ENCODE measurements at regions of chr3 and their contacts with region 1.

Region 1: DNA sequence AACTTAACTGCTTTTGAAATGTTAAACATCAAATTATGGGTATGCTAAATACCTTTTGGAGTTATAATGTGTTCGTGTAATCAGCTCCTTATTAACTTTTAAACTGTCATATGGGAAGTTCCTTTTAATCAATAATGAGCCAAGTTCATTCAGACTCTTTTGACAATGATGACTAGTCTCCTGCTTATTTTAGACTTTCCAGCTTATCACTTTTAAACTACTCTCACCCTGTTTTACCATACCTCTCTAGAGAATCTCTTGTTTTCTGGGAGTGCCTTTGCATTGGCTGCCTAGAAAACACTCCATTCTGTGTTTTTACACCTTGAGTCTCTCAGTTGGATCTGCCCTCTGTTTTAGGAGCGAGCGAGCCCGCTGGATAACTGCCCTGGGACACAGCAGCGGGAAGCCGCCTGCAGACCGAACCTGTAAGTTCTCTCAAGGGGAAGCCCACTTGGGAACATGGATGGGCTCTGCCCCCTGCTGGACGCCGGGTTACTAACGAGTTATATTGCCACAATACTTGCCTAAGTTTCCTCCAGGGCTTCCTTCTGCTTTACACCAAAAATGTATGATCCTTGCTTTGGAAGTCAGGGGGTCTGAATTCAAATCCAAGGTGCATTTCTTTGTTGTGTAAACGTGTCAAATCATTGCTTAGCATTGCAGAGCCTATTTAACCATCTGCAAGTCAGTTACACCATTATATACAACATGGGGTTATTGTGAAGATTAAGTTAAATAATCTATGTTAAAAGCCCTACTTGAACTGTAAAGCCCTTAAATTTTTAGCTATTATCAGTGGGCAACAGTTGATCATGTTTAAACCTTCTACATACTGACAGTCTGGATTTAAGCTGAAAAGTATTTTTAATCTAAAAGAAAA is 71.3 kb downstream of the DHX36 start:
- DNase-seq: peak; percentile 88
- H3K4me3 Mint-ChIP-seq: no peak overlapping the region
- H3K27ac Mint-ChIP-seq: no peak overlapping the region
- H3K4me1 Mint-ChIP-seq: no peaks in the 10 kb centered on the region
- H3K27me3 Mint-ChIP-seq: no peaks in the 10 kb centered on the region

Region 2: DNA sequence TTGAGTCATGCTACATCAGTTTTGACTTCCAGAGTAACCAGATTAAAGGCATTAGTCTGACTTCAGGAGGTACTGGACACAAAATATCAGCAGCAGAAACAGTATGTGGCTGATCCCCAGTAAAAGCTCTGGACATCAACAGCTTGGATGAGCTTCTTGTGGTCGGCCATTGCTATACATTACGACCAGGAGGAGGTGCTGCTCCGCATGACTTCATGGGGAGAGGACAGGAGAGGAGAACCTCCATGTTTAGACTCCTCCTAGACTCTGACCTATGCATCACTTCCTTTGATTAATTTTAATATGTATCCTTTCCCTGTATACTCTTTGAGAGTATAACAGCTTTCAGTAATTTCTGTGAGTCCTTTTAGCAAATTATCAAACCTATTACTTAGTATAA is 417.5 kb before region 1 on chr3:
- CTCF ChIA-PET with region 1: no interaction called
- intact Hi-C with region 1: loop called (anchors 10 kb)
- DNase-seq: no peak
- H3K4me3 Mint-ChIP-seq: no peak overlapping the region
- H3K27ac Mint-ChIP-seq: no peak overlapping the region
- H3K4me1 Mint-ChIP-seq: no peaks in the 10 kb centered on the region
- H3K27me3 Mint-ChIP-seq: peaks cover 5% of the 10 kb centered on the region

Region 3: GRCh38 chr3:154040286-154040685 is 212.7 kb before region 1 on chr3:
- CTCF ChIA-PET with region 1: no interaction called
- intact Hi-C with region 1: loop called (anchors 1 kb)
- DNase-seq: no peak
- H3K4me3 Mint-ChIP-seq: no peak overlapping the region
- H3K27ac Mint-ChIP-seq: no peak overlapping the region
- H3K4me1 Mint-ChIP-seq: no peaks in the 10 kb centered on the region
- H3K27me3 Mint-ChIP-seq: peaks cover 7% of the 10 kb centered on the region

Region 4: DNA sequence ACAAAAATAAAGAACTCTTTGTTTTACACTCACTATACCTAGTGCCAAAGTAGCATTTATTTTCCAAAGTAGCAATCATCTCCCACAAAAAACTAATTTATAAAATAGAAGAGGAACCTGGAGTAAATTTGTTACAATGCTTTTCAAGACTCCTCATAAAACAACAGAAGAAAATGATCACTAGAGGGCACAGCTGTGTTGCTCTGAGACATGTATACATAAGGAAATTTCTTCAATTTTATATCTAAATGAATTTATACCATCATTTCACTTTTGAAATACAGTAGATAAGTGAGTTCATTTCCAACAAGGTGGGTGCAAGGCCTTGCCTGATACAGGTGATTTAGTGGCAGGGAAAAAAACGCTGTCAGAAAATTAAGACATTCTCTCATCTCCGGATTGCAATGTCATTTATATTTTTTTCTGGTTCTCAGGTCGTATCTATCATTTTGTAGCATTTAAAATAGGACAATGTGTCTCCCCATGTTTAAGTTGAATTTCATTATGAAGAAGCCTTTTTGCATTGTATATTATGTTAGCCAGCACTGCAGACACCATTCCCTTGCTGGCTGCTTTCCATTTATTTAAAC is 157.1 kb before region 1 on chr3:
- CTCF ChIA-PET with region 1: interaction called, 3 read pairs
- intact Hi-C with region 1: loop called (anchors 1 kb)
- DNase-seq: no peak
- H3K4me3 Mint-ChIP-seq: no peak overlapping the region
- H3K27ac Mint-ChIP-seq: no peak overlapping the region
- H3K4me1 Mint-ChIP-seq: no peaks in the 10 kb centered on the region
- H3K27me3 Mint-ChIP-seq: no peaks in the 10 kb centered on the region

Region 5: DNA sequence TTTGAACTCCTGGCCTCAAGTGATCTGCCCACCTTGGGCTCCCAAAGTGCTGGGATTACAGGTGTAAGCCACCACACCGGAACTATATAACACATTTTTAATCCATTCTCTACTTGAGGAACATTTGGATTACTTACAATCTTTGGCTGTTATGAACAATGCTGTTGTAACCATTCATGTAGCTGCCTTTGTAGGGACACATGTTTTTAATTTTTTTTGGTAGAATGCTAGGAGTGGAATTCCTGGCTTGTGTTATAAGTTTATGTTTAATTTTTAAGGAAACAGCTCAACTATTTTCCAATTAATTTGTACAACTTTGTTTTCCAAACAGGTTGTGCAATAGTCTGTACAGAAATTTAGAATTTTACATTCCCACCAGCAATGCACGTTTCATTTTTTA is 125.3 kb after region 1 on chr3:
- CTCF ChIA-PET with region 1: no interaction called
- intact Hi-C with region 1: no loop called
- DNase-seq: no peak
- H3K4me3 Mint-ChIP-seq: no peak overlapping the region
- H3K27ac Mint-ChIP-seq: no peak overlapping the region
- H3K4me1 Mint-ChIP-seq: no peaks in the 10 kb centered on the region
- H3K27me3 Mint-ChIP-seq: peaks cover 7% of the 10 kb centered on the region